CD4-positive, alpha-beta memory T cell (primary cell): ENCODE measurements at regions of chr7 and their contacts with region 1.

Region 1: DNA sequence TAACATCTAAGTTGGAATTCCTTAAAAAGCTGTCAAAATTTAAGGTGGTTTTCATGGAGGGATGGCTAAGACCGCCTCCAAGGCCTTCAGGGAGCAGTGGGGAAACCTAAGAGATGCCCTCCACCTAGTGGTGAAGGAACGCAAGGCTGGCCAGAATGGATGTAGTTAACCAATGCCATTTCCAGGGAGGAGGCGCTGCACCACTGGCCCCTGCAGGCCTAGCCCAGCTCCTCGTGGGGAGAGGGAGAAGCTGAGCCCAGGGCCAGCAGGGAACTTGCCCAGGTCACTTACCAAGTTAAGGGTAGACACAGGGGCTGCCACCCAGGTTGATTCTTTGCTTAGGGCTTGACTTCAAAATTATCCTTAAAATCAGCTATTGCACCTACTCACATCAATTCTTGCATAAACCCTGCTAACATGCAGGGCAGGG is 32.0 kb downstream of the FIGNL1 start:
- DNase-seq: peak; percentile 59 to 71 (median 63)
- H3K4me3 ChIP-seq: no peak overlapping the region
- H3K4me3 Mint-ChIP-seq: no peak overlapping the region
- H3K27ac ChIP-seq: no peak overlapping the region
- H3K27ac Mint-ChIP-seq: peak overlapping the region in 1 of 7 donors; percentile 62
- H3K4me1 ChIP-seq: peaks cover 16% of the 10 kb centered on the region
- H3K4me1 Mint-ChIP-seq: peaks cover 12 to 23% (median 16%) of the 10 kb centered on the region in 4 donors
- H3K27me3 ChIP-seq: no peaks in the 10 kb centered on the region
- H3K27me3 Mint-ChIP-seq: no peaks in the 10 kb centered on the region

Region 2: GRCh38 chr7:50142425-50143017 is 275.6 kb before region 1 on chr7:
- CTCF ChIA-PET with region 1: interaction called, 151 read pairs
- POLR2A ChIA-PET with region 1: interaction called, 7 read pairs
- intact Hi-C with region 1: loop called (anchors 1 kb)
- DNase-seq: peak in 4 of 5 donors; percentile 57 to 63 (median 60)
- H3K4me3 ChIP-seq: no peak overlapping the region
- H3K4me3 Mint-ChIP-seq: peak overlapping the region; percentile 3 to 77 (median 49)
- H3K27ac ChIP-seq: no peak overlapping the region
- H3K27ac Mint-ChIP-seq: peak overlapping the region in 6 of 7 donors; percentile 0 to 93 (median 36)
- H3K4me1 ChIP-seq: peaks cover 26% of the 10 kb centered on the region
- H3K4me1 Mint-ChIP-seq: peaks cover 11 to 25% (median 18%) of the 10 kb centered on the region in 4 donors
- H3K27me3 ChIP-seq: no peaks in the 10 kb centered on the region
- H3K27me3 Mint-ChIP-seq: peaks cover 0 to 2% of the 10 kb centered on the region in 2 donors

Region 3: GRCh38 chr7:50304158-50304910 is 113.8 kb before region 1 on chr7 and contains the start of gene IKZF1:
- CTCF ChIA-PET with region 1: interaction called, 8 read pairs
- POLR2A ChIA-PET with region 1: interaction called, 8 read pairs
- intact Hi-C with region 1: loop called (anchors 1 kb)
- DNase-seq: peak; percentile 53 to 66 (median 61)
- H3K4me3 ChIP-seq: peak within 1 kb of the TSS; percentile 86 to 96
- H3K4me3 Mint-ChIP-seq: peak within 1 kb of the TSS; percentile 97 to 100 (median 100)
- H3K27ac ChIP-seq: peak within 1 kb of the TSS; percentile 90
- H3K27ac Mint-ChIP-seq: peak within 1 kb of the TSS; percentile 90 to 99 (median 96)
- H3K4me1 ChIP-seq: peaks cover 53% of the 10 kb centered on the region
- H3K4me1 Mint-ChIP-seq: peaks cover 33 to 71% (median 47%) of the 10 kb centered on the region in 4 donors
- H3K27me3 ChIP-seq: no peaks in the 10 kb centered on the region
- H3K27me3 Mint-ChIP-seq: no peaks in the 10 kb centered on the region
- total RNA-seq, gene IKZF1: 474 to 479 TPM

Region 4: DNA sequence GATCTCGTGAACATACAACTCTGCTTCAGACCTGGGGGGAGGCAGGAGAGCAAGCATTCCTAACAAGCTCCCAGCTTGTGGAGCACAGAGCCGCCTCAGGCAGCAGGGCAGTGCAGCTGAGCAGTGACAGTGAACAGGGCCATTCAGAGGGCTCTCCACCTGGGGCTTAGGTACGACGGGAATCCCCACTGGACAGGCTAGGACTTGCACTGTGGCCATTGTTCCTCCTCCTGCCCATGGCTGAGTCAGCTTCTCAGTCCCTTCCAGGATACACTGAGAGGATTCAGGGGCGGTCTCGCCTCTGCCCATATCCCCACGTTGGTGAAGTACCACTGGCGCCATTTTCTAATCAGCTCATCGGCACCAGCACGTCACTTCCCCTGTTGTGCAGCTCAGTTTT is 39.0 kb before region 1 on chr7:
- CTCF ChIA-PET with region 1: interaction called, 19 read pairs
- POLR2A ChIA-PET with region 1: no interaction called
- intact Hi-C with region 1: no loop called
- DNase-seq: no peak
- H3K4me3 ChIP-seq: no peak overlapping the region
- H3K4me3 Mint-ChIP-seq: peak overlapping the region in 4 of 8 donors; percentile 17 to 46 (median 24)
- H3K27ac ChIP-seq: peak overlapping the region; percentile 18
- H3K27ac Mint-ChIP-seq: peak overlapping the region in 6 of 7 donors; percentile 77 to 89 (median 87)
- H3K4me1 ChIP-seq: peaks cover 94% of the 10 kb centered on the region
- H3K4me1 Mint-ChIP-seq: peaks cover 66 to 99% (median 86%) of the 10 kb centered on the region in 4 donors
- H3K27me3 ChIP-seq: no peaks in the 10 kb centered on the region
- H3K27me3 Mint-ChIP-seq: no peaks in the 10 kb centered on the region

Region 5: GRCh38 chr7:50397320-50397970 is 20.7 kb before region 1 on chr7:
- CTCF ChIA-PET with region 1: interaction called, 15 read pairs
- POLR2A ChIA-PET with region 1: interaction called, 5 read pairs
- intact Hi-C with region 1: no loop called
- DNase-seq: peak; percentile 42 to 77 (median 54)
- H3K4me3 ChIP-seq: no peak overlapping the region
- H3K4me3 Mint-ChIP-seq: peak overlapping the region in 6 of 8 donors; percentile 21 to 72 (median 49)
- H3K27ac ChIP-seq: peak overlapping the region; percentile 56
- H3K27ac Mint-ChIP-seq: peak overlapping the region; percentile 80 to 99 (median 91)
- H3K4me1 ChIP-seq: peaks cover 75% of the 10 kb centered on the region
- H3K4me1 Mint-ChIP-seq: peaks cover 59 to 79% (median 67%) of the 10 kb centered on the region in 4 donors
- H3K27me3 ChIP-seq: no peaks in the 10 kb centered on the region
- H3K27me3 Mint-ChIP-seq: no peaks in the 10 kb centered on the region

Region 6: GRCh38 chr7:50461695-50462094 is 43.6 kb after region 1 on chr7:
- CTCF ChIA-PET with region 1: no interaction called
- POLR2A ChIA-PET with region 1: no interaction called
- intact Hi-C with region 1: no loop called
- DNase-seq: no peak
- H3K4me3 ChIP-seq: no peak overlapping the region
- H3K4me3 Mint-ChIP-seq: no peak overlapping the region
- H3K27ac ChIP-seq: no peak overlapping the region
- H3K27ac Mint-ChIP-seq: no peak overlapping the region
- H3K4me1 ChIP-seq: no peaks in the 10 kb centered on the region
- H3K4me1 Mint-ChIP-seq: no peaks in the 10 kb centered on the region
- H3K27me3 ChIP-seq: no peaks in the 10 kb centered on the region
- H3K27me3 Mint-ChIP-seq: peaks cover 0 to 2% of the 10 kb centered on the region in 2 donors

Region 7: GRCh38 chr7:50679218-50680007 is 261.3 kb after region 1 on chr7:
- CTCF ChIA-PET with region 1: interaction called, 5 read pairs
- POLR2A ChIA-PET with region 1: no interaction called
- intact Hi-C with region 1: loop called (anchors 2 kb)
- DNase-seq: peak in 4 of 5 donors; percentile 51 to 64 (median 58)
- H3K4me3 ChIP-seq: no peak overlapping the region
- H3K4me3 Mint-ChIP-seq: no peak overlapping the region
- H3K27ac ChIP-seq: no peak overlapping the region
- H3K27ac Mint-ChIP-seq: no peak overlapping the region
- H3K4me1 ChIP-seq: no peaks in the 10 kb centered on the region
- H3K4me1 Mint-ChIP-seq: peaks cover 0 to 3% (median under 1%) of the 10 kb centered on the region in 4 donors
- H3K27me3 ChIP-seq: no peaks in the 10 kb centered on the region
- H3K27me3 Mint-ChIP-seq: peaks cover 0 to under 1% of the 10 kb centered on the region in 2 donors